ENCODE measurements at regions of chr4 and their contacts with region 1.

Region 1: GRCh38 chr4:41990365-41991111 is at the start of gene SLC30A9:
- DNase-seq: peak; percentile 94 to 98 (median 97)
- H3K4me3 ChIP-seq: peak within 1 kb of the TSS; percentile 70 to 100 (median 93)
- H3K27ac ChIP-seq: peak within 1 kb of the TSS in 49 of 59 donors; percentile 8 to 93 (median 67)
- H3K27me3 ChIP-seq: no peaks in the 10 kb centered on the region
- CTCF ChIP-seq: peak in 43 of 56 donors; percentile 9 to 54 (median 34)
- total RNA-seq, gene SLC30A9: 49.4 to 120 (median 83.1) TPM

Region 2: DNA sequence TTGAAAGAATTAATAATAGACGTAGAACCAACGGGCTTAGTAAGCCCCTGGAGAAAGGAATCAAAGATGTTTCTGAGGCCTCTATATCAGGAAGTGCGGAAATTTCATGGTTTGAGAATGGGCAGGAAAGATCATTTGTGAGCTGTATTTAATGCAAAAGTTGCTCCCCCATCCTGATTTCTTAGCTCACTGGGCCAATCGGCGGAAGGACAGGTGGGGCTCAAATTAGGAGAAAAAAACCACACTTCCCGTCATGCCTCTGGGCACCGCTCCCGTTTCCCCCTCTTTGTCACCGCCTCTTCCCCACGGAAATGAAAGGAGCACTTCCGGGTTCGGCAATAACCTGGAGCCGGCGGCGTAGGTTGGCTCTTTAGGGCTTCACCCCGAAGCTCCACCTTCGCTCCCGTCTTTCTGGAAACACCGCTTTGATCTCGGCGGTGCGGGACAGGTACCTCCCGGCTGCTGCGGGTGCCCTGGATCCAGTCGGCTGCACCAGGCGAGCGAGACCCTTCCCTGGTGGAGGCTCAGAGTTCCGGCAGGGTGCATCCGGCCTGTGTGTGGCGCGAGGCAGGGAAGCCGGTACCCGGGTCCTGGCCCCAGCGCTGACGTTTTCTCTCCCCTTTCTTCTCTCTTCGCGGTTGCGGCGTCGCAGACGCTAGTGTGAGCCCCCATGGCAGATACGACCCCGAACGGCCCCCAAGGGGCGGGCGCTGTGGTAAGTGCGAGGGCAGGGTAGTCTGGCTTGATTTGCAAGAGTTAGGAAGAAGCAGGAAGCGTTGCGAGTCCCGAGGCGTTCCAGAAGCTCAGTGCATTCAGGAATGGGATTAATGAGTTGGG is 55.5 kb before region 1 on chr4 and contains the start of gene TMEM33:
- intact Hi-C with region 1: loop called (anchors 2 kb)
- DNase-seq: peak; percentile 76 to 95 (median 88)
- H3K4me3 ChIP-seq: peak within 1 kb of the TSS; percentile 72 to 100 (median 93)
- H3K27ac ChIP-seq: peak within 1 kb of the TSS in 49 of 59 donors; percentile 8 to 87 (median 62)
- H3K27me3 ChIP-seq: no peaks in the 10 kb centered on the region
- CTCF ChIP-seq: peak in 44 of 56 donors; percentile 11 to 61 (median 33)
- total RNA-seq, gene TMEM33: 42.8 to 88.4 (median 63.7) TPM